Left cardiac atrium (tissue), 4 donors: ENCODE measurements at regions of chr3 and their contacts with region 1.

Region 1: GRCh38 chr3:132606085-132606484 is 9.0 kb downstream of the ACKR4 start:
- DNase-seq: no peak
- ATAC-seq: peak in 1 of 2 donors; percentile 73

Region 2: GRCh38 chr3:132464066-132464465 is 142.0 kb before region 1 on chr3:
- intact Hi-C with region 1: no loop called
- DNase-seq: no peak
- ATAC-seq: no peak

Region 3: GRCh38 chr3:132573797-132574211 is 32.3 kb before region 1 on chr3:
- intact Hi-C with region 1: loop called in 1 of 2 experiments (anchors 5 kb)
- DNase-seq: no peak
- ATAC-seq: peak in 1 of 2 donors; percentile 28